ENCODE measurements at regions of chr19 and their contacts with region 1.

Region 1: DNA sequence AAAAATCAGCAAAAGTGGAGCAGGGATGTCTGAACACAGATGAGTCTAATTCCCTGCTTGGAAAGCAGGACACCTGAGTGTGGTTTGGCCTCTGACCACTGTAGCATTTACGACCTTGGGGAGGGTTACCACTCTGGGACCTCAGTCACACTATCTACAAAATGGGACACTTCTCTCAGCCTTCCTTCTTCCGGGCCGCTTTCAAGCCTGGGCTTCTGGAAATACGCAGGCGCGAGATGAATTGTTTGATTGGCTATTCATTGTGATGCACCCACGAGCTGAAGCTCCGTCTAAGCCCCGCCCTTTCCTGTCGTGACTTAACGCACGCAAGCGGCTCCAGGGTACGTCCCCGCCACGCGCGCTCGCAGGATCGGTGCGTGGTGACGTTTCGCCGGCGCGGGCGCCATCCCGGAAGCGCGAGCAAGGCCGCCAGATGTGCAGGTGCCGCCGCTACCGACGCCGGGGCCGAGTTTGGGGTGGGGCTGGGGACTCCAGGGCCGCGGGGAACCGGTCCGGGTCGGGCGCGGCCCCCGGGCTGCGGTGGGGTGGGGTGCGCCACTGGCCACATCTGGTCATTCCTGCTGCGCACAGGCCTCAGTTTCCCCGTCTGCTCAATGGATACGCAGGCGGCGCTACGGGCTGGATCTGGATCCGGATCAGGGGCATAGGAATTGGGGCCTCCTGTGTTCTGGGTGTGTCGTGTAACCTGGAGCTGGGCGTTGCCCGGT is at the start of gene KXD1:
- DNase-seq: peak; percentile 94 to 99 (median 97)

Region 2: GRCh38 chr19:18469069-18469846 is 88.4 kb before region 1 on chr19:
- intact Hi-C with region 1: no loop called
- DNase-seq: peak in 6 of 10 donors; percentile 45 to 93 (median 64)

Region 3: DNA sequence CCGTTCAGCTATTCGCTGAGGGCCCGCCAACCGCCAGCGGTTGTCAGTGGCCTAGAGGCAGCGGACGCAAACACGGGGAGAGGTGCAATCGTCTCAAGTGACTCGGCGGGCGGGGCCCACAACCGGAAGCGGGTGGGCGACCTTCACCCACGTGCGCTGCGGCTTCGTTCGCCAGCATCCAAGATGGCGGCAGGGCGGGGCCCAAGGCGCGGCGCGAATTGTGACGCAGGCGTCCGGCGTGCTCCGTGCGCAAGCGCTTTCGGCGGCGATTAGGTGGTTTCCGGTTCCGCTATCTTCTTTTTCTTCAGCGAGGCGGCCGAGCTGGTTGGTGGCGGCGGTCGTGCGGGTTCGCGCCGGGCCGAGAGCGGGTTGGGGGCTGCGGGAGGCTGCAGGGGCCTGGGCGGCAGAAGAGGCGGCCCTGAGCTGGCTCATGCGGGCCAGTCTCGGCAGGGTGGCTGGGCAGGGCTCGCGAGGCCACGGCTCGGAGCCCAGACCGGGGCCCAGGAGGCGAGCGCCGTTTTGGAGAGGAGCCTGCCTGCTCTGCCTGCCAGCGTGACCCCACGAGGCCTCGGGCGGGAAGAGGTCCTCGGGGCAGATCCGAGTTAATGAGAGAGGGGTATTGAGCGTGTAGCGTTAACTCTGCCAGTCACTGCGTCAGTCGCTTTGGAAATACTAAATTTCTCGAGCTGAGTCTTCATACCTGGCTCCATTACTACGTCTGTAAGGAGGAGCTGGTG is 14.1 kb after region 1 on chr19 and contains the start of gene UBA52:
- intact Hi-C with region 1: loop called (anchors 1 kb)
- DNase-seq: peak; percentile 95 to 99 (median 96)